ENCODE measurements at regions of chr12 and their contacts with region 1.

Region 1: GRCh38 chr12:51980051-51980808 is 26.5 kb upstream of the TAMALIN start:
- DNase-seq: peak; percentile 77
- H3K4me3 ChIP-seq: no peak overlapping the region
- H3K27ac ChIP-seq: no peak overlapping the region
- H3K4me1 ChIP-seq: peaks cover 12% of the 10 kb centered on the region
- H3K27me3 ChIP-seq: no peaks in the 10 kb centered on the region
- CTCF ChIP-seq: peak; percentile 98

Region 2: GRCh38 chr12:51895501-51896041 is 84.7 kb before region 1 on chr12:
- CTCF ChIA-PET with region 1: interaction called, 4 read pairs
- POLR2A ChIA-PET with region 1: no interaction called
- intact Hi-C with region 1: loop called (anchors 1 kb)
- DNase-seq: no peak
- H3K4me3 ChIP-seq: no peak overlapping the region
- H3K27ac ChIP-seq: no peak overlapping the region
- H3K4me1 ChIP-seq: no peaks in the 10 kb centered on the region
- H3K27me3 ChIP-seq: no peaks in the 10 kb centered on the region
- CTCF ChIP-seq: no peak

Region 3: DNA sequence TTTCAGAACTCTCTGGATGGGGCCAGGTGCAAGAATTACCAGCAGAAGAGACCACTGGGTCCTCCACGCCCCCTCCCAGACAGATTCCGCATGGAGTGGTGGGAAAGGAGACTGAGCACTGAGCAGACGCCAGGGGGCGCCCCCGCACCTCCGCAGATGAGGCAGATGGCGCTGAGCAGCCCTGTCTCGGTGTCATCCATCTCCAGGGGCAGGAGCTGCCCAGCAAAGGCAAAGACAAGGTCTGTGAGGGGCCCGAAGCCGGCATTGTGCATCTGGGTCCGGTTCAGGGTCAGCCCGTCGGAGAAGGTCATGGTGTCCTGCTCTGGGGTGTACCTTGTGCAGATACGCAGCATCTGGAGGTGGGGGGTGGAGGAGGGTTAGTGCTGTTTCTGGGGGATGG is 1233.1 kb after region 1 on chr12:
- CTCF ChIA-PET with region 1: no interaction called
- POLR2A ChIA-PET with region 1: no interaction called
- intact Hi-C with region 1: no loop called
- DNase-seq: peak; percentile 86
- H3K4me3 ChIP-seq: no peak overlapping the region
- H3K27ac ChIP-seq: no peak overlapping the region
- H3K4me1 ChIP-seq: peaks cover 19% of the 10 kb centered on the region
- H3K27me3 ChIP-seq: no peaks in the 10 kb centered on the region
- CTCF ChIP-seq: peak; percentile 98